HepG2 (cell line): ENCODE measurements at regions of chr3 and their contacts with region 1.

Region 1: DNA sequence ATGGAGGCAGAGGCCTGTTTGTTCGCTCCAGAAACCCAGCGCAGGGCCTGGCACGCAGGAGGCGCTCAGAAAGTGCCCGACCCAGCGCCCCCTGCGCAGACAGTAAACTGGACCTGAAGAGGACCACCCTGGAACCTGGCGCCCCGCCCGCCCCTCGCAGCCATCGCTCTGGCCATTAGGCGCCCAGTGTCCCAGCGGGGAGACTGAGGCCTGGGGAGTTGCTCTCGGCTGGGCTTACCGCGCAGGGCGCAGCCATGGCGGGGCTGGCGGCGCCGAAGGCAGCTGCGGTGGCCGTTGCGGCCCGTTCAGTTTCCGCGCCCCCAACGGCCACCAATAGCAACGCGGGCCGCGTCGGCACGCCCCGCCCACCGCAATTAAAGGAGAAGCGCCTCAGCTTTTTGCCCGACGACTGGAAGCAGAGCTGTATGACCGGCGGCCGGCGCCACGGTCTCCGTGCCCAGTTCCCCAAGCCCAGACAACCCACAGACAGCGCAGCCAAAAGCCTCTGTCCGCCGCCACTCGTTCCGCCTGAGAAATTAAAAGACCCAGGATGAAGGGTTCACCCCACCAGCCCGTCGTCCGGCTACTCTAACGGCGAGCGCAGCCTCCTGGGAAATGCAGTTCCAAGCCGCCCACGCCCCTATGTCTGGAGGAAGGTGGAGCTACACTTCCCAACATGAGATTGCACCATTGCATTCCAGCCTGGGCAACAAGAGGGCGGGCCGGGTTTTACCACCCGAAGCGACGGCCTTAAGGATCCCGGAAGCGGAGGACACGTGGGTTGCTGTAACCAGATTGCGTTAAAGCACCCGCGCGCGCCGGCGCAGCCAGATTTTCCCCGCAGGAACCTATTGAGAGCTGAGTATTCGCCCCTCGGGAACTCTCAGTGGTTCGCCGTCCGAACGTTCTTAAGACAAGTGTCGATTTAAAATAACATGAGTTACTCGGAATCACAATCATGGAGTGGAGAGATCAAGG is at the start of gene POC1A:
- DNase-seq: peak; percentile 97
- ATAC-seq: peak; percentile 96
- H3K4me3 ChIP-seq: peak within 1 kb of the TSS; percentile 84 to 87 (median 85)
- H3K27ac ChIP-seq: peak within 1 kb of the TSS; percentile 90
- H3K4me1 ChIP-seq: peaks cover 36% of the 10 kb centered on the region
- H3K27me3 ChIP-seq: no peaks in the 10 kb centered on the region
- CTCF ChIP-seq: peak; percentile 25
- EP300 ChIP-seq: peak; percentile 36; a peak in 3 of 4 replicates
- POLR2A ChIP-seq: peak; percentile 74 to 76
- RAD21 ChIP-seq: peak; percentile 10; the same call in 1 of the 2 replicates
- total RNA-seq, gene POC1A: 20.0 and 22.5 TPM in 2 replicates

Region 2: GRCh38 chr3:51982782-51983577 is 171.4 kb before region 1 on chr3 and contains the start of gene ACY1:
- CTCF ChIA-PET with region 1: no interaction called
- POLR2A ChIA-PET with region 1: interaction called, 24 read pairs
- in situ Hi-C with region 1: no loop called
- intact Hi-C with region 1: no loop called
- DNase-seq: peak; percentile 87
- ATAC-seq: peak; percentile 80
- H3K4me3 ChIP-seq: peak within 1 kb of the TSS; percentile 70 to 83 (median 73)
- H3K27ac ChIP-seq: peak within 1 kb of the TSS; percentile 94
- H3K4me1 ChIP-seq: peaks cover 51% of the 10 kb centered on the region
- H3K27me3 ChIP-seq: no peaks in the 10 kb centered on the region
- CTCF ChIP-seq: peak; percentile 3; the same call in 1 of the 2 replicates
- EP300 ChIP-seq: peak; percentile 19 to 73; a peak in 3 of 4 replicates
- POLR2A ChIP-seq: no peak; a peak in 1 of 4 replicates
- RAD21 ChIP-seq: 0 out of 2 replicates have a peak, but pooled peaks have one; percentile 3
- total RNA-seq, gene ACY1: 112 and 113 TPM in 2 replicates

Region 3: GRCh38 chr3:52056968-52057805 is 97.2 kb before region 1 on chr3:
- CTCF ChIA-PET with region 1: no interaction called
- POLR2A ChIA-PET with region 1: interaction called, 21 read pairs
- in situ Hi-C with region 1: no loop called
- intact Hi-C with region 1: no loop called
- DNase-seq: peak; percentile 97
- ATAC-seq: peak; percentile 81
- H3K4me3 ChIP-seq: peak overlapping the region; percentile 62 to 83 (median 68)
- H3K27ac ChIP-seq: peak overlapping the region; percentile 58
- H3K4me1 ChIP-seq: peaks cover 50% of the 10 kb centered on the region
- H3K27me3 ChIP-seq: peaks cover 4 to 31% of the 10 kb centered on the region in 2 experiments; a peak in 4 of 5 replicates
- CTCF ChIP-seq: peak; percentile 76
- EP300 ChIP-seq: 0 out of 4 replicates have a peak, but pooled peaks of 1 of the 2 experiments have one; percentile 7
- POLR2A ChIP-seq: no peak
- RAD21 ChIP-seq: 0 out of 2 replicates have a peak, but pooled peaks have one; percentile 11

Region 4: DNA sequence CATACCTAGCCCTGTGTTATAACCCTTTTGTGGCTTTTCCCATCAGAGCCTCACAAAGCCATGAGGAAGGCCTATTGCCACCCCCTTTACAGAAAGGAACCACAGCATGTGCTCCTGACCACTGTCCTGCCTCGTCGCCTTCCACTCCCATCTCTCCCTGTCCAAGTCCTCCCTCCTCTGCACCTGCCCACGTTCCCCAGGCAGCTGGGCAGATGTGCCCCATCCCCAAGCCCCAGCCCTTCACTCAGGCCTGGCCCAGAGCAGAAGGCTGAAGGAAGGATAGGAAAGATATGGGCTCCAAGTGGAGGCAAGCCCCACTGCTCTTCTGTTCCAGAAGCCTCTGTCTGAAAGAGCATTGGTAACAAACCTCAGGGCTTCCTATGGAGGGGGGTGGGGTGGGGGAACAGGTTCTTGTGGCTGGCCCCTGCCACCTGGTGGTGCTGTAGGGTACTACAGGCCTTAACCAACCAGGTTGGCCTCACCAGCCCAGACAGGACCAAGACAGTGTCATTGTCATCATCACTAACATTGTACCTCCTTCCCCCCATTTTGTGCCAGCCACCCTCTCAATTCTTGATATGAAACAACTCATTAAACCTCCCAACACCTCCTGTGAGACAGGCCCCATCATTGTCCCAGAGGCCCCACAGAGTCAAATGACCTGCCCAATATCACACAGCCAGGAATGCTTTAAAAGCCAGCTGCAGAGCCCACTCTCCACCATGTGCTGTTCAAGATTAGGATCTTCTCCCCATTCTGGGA is 10.2 kb before region 1 on chr3:
- CTCF ChIA-PET with region 1: no interaction called
- POLR2A ChIA-PET with region 1: no interaction called
- in situ Hi-C with region 1: no loop called
- intact Hi-C with region 1: no loop called
- DNase-seq: peak; percentile 58
- ATAC-seq: peak; percentile 87
- H3K4me3 ChIP-seq: no peak overlapping the region
- H3K27ac ChIP-seq: no peak overlapping the region
- H3K4me1 ChIP-seq: no peaks in the 10 kb centered on the region
- H3K27me3 ChIP-seq: no peaks in the 10 kb centered on the region; a peak in 1 of 5 replicates
- CTCF ChIP-seq: peak; percentile 93
- EP300 ChIP-seq: no peak
- POLR2A ChIP-seq: no peak
- RAD21 ChIP-seq: peak; percentile 93

Region 5: DNA sequence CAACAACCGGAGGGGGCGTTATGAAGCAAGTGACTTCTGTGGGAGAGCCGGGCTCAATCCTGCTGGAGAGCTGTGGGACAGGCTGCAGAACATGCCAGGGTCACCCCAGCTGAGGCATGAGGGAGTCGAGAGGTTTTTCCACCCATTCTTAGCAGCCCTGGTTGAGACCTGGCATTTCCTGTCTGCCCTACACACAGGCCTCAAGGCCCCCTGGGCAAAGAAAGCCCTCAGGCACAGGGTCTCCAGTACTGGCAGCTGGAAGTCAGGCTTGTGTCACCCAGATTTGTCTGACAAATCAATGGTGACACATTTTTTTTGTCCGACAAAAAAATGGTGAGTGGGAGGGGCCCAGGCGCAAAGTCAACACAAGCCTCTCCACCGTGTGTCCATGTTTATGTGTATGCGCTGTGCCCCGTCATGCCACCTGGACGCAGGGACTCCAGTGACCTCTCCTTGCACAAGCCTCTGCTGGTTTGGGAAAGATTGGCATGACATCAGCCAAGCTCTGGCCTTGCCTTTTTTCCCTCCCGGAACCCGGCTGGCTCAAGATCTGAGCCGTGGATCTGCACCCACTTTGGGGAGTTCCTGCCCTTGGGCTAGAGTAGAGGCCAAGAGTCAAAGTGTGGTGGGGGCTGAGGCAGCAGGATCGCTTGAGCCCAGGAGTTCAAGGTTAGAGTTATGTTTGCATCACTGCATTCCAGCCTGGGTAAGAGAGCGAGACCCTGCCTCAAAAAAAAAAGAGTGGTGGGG is 22.7 kb after region 1 on chr3:
- CTCF ChIA-PET with region 1: no interaction called
- POLR2A ChIA-PET with region 1: interaction called, 30 read pairs
- in situ Hi-C with region 1: no loop called
- intact Hi-C with region 1: no loop called
- DNase-seq: peak; percentile 86
- ATAC-seq: peak; percentile 81
- H3K4me3 ChIP-seq: peak overlapping the region; percentile 43 to 60 (median 48); a peak in 5 of 6 replicates
- H3K27ac ChIP-seq: peak overlapping the region; percentile 85
- H3K4me1 ChIP-seq: peaks cover 64% of the 10 kb centered on the region
- H3K27me3 ChIP-seq: no peaks in the 10 kb centered on the region
- CTCF ChIP-seq: no peak; the same call in none of the 2 replicates
- EP300 ChIP-seq: peak; percentile 27 to 48; a peak in 2 of 4 replicates
- POLR2A ChIP-seq: peak; percentile 25 to 50; a peak in 2 of 4 replicates
- RAD21 ChIP-seq: no peak

Region 6: DNA sequence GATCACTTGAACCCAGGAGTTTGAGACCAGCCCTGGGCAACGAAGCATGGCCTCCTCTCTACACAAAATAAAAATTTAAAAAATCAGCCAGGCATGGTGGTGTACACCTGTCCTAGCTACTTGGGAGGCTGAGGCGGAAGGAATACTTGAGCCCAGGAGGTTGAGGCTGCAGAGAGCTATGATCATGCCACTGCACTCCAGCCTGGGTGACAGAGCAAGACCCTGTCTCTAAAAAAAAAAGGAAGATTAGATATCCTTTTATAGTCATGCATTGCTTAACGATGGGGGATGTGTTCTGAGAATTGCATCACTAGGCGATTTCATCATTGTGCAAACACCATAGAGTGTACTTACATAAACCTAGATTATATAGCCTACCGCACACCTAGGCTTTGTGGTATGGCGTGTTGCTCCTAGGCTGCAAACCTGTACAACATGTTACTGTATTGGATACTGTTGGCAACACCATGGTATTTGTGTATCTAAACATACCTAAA is 56.2 kb after region 1 on chr3:
- CTCF ChIA-PET with region 1: no interaction called
- POLR2A ChIA-PET with region 1: interaction called, 7 read pairs
- in situ Hi-C with region 1: no loop called
- intact Hi-C with region 1: loop called (anchors 2 kb)
- DNase-seq: peak; percentile 96
- ATAC-seq: peak; percentile 85
- H3K4me3 ChIP-seq: no peak overlapping the region
- H3K27ac ChIP-seq: peak overlapping the region; percentile 77
- H3K4me1 ChIP-seq: peaks cover 49% of the 10 kb centered on the region
- H3K27me3 ChIP-seq: no peaks in the 10 kb centered on the region
- CTCF ChIP-seq: no peak
- EP300 ChIP-seq: peak; percentile 91 to 98
- POLR2A ChIP-seq: 0 out of 4 replicates have a peak, but pooled peaks of 1 of the 2 experiments have one; percentile 9
- RAD21 ChIP-seq: no peak